Naive thymus-derived CD4-positive, alpha-beta T cell (primary cell): ENCODE measurements at regions of chr5 and their contacts with region 1.

Region 1: DNA sequence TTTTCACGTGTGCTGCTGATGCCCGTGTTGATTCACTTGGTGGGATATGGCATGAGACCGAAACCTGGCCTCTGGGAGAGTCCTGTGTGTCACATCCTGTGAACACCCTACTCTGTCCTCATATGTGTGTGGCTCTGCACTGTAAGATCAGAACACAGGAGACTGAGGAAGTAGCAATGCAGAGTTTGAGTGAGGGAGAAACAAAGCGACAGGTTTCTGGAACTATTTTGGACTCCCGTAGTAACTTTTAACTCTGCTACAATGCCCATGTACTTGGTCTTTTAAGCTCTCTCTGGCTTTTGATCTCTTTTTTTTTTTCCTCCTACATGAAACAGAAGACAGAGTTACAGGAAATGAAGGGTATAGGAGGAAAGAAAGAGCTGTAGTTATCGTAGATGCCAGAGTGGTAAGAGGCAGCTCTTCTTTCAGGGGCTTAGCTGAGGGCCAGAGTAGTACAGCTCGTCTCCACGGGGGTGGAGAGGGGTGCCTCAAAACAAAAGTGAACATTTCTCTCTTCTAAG is 26.6 kb downstream of the GRAMD2B start:
- DNase-seq: peak in 8 of 9 donors; percentile 48 to 75 (median 64)
- ATAC-seq: peak; percentile 87
- H3K4me3 ChIP-seq: peak overlapping the region; percentile 47
- H3K4me3 Mint-ChIP-seq: peak overlapping the region; percentile 75 to 94 (median 88)
- H3K27ac ChIP-seq: peak overlapping the region; percentile 77
- H3K27ac Mint-ChIP-seq: peak overlapping the region; percentile 96 to 100 (median 99)
- H3K4me1 ChIP-seq: peaks cover 11 to 57% of the 10 kb centered on the region in 2 donors
- H3K4me1 Mint-ChIP-seq: peaks cover 32 to 90% (median 75%) of the 10 kb centered on the region in 7 donors
- H3K27me3 ChIP-seq: no peaks in the 10 kb centered on the region
- H3K27me3 Mint-ChIP-seq: no peaks in the 10 kb centered on the region

Region 2: GRCh38 chr5:126462239-126463014 is 12.6 kb after region 1 on chr5:
- CTCF ChIA-PET with region 1: interaction called, 3 read pairs
- POLR2A ChIA-PET with region 1: interaction called, 7 read pairs
- intact Hi-C with region 1: loop called in 1 of 2 experiments (anchors 2 kb)
- DNase-seq: no peak
- ATAC-seq: no peak
- H3K4me3 ChIP-seq: no peak overlapping the region
- H3K4me3 Mint-ChIP-seq: no peak overlapping the region
- H3K27ac ChIP-seq: no peak overlapping the region
- H3K27ac Mint-ChIP-seq: peak overlapping the region in 6 of 9 donors; percentile 0 to 88 (median 68)
- H3K4me1 ChIP-seq: peaks cover 0 to 12% of the 10 kb centered on the region in 2 donors
- H3K4me1 Mint-ChIP-seq: peaks cover 6 to 49% (median 34%) of the 10 kb centered on the region in 7 donors
- H3K27me3 ChIP-seq: no peaks in the 10 kb centered on the region
- H3K27me3 Mint-ChIP-seq: no peaks in the 10 kb centered on the region

Region 3: GRCh38 chr5:126499853-126500342 is 50.1 kb after region 1 on chr5:
- CTCF ChIA-PET with region 1: interaction called, 6 read pairs
- POLR2A ChIA-PET with region 1: interaction called, 6 read pairs
- intact Hi-C with region 1: loop called in 1 of 2 experiments (anchors 2 kb)
- DNase-seq: peak in 7 of 9 donors; percentile 36 to 84 (median 78)
- ATAC-seq: peak; percentile 88
- H3K4me3 ChIP-seq: no peak overlapping the region
- H3K4me3 Mint-ChIP-seq: peak overlapping the region in 5 of 10 donors; percentile 10 to 54 (median 24)
- H3K27ac ChIP-seq: no peak overlapping the region
- H3K27ac Mint-ChIP-seq: peak overlapping the region in 8 of 9 donors; percentile 22 to 88 (median 76)
- H3K4me1 ChIP-seq: peaks cover 0 to 25% of the 10 kb centered on the region in 2 donors
- H3K4me1 Mint-ChIP-seq: peaks cover 4 to 58% (median 44%) of the 10 kb centered on the region in 7 donors
- H3K27me3 ChIP-seq: no peaks in the 10 kb centered on the region
- H3K27me3 Mint-ChIP-seq: no peaks in the 10 kb centered on the region

Region 4: DNA sequence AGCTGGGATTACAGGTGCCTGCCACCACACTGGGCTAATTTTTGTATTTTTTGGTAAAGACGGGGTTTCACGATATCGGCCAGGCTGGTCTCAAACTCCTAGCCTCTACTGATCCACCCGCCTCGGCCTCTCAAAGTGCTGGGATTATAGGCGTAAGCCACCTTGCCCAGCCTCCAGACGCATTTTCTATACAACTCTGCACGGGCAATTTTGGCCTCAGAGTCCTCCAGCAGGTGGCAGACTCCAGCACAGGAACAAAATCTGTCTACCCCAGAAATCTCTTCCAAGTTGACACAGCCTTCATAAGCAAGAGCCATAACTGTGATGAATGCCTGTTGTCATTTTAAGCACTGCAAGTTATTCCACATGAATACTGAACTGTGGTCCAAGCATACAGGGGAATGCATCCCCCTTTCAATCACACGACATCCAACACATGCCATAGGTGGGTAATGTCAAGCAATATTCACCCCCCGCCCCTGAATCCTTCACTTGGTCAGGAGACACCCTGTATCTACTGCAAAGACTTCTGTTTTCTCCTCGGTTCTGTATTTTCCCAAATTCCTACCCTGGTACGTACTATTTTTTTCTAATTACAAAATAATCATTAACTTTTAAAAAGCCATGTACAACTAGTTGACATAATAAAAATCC is 94.4 kb after region 1 on chr5:
- CTCF ChIA-PET with region 1: interaction called, 4 read pairs
- POLR2A ChIA-PET with region 1: no interaction called
- intact Hi-C with region 1: loop called in 1 of 2 experiments (anchors 1 kb)
- DNase-seq: peak in 5 of 9 donors; percentile 14 to 30 (median 28)
- ATAC-seq: peak; percentile 48
- H3K4me3 ChIP-seq: no peak overlapping the region
- H3K4me3 Mint-ChIP-seq: no peak overlapping the region
- H3K27ac ChIP-seq: no peak overlapping the region
- H3K27ac Mint-ChIP-seq: peak overlapping the region in 1 of 9 donors; percentile 12
- H3K4me1 ChIP-seq: no peaks in the 10 kb centered on the region
- H3K4me1 Mint-ChIP-seq: no peaks in the 10 kb centered on the region
- H3K27me3 ChIP-seq: no peaks in the 10 kb centered on the region
- H3K27me3 Mint-ChIP-seq: peaks cover 0 to 6% (median 0%) of the 10 kb centered on the region in 5 donors

Region 5: DNA sequence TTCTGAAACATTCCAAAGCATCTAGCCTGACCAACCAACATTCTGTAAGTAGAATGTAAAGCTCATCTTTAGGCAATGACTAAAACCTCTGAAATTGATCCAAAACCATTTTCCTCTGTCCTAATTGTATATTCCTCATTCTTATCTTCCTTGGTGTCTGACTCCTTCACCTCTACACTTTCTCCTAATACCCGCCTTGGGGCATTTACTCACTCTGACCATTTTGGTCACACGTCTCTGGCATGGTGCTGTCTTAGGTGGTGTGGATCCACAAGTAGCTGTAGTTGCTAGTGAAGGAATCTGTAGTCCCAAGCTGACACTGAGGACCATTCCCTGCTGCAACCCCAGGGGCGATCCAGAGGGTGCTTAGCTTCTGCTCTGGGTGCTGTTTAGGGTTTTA is 286.3 kb after region 1 on chr5:
- CTCF ChIA-PET with region 1: no interaction called
- POLR2A ChIA-PET with region 1: no interaction called
- intact Hi-C with region 1: no loop called
- DNase-seq: no peak
- ATAC-seq: no peak
- H3K4me3 ChIP-seq: no peak overlapping the region
- H3K4me3 Mint-ChIP-seq: no peak overlapping the region
- H3K27ac ChIP-seq: no peak overlapping the region
- H3K27ac Mint-ChIP-seq: no peak overlapping the region
- H3K4me1 ChIP-seq: no peaks in the 10 kb centered on the region
- H3K4me1 Mint-ChIP-seq: peaks cover 0 to 1% (median 0%) of the 10 kb centered on the region in 7 donors
- H3K27me3 ChIP-seq: no peaks in the 10 kb centered on the region
- H3K27me3 Mint-ChIP-seq: peaks cover 0 to 5% (median 2%) of the 10 kb centered on the region in 5 donors